GM12878 (cell line): ENCODE measurements at regions of chr3 and their contacts with region 1.

Region 1: DNA sequence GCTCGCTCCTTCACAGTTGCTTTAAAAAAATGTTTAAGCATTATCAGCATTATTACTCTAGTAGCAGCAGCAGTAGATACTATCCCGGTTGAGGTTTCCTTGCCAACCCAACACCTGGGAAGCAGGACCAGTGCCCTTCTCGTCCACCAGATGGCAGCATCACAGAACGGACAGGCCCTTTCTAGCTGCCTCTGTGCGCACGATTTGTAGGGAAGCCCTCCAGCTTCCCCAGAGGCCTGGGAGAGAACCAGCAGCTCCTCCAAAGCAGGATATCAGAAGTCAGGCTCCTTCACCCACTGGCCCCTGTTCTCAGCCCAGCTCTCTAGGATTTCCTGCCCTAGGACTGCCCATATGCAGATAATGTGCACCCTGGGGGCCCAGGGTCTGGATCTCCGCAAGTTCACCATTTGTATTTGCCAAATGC is 16.8 kb upstream of the ESYT3 start:
- DNase-seq: no peak
- ATAC-seq: peak; percentile 98
- H3K4me3 ChIP-seq: no peak overlapping the region
- H3K27ac ChIP-seq: no peak overlapping the region
- H3K4me1 ChIP-seq: no peaks in the 10 kb centered on the region
- H3K27me3 ChIP-seq: peaks cover 0 to 2% of the 10 kb centered on the region in 2 experiments; a peak in 1 of 4 replicates
- CTCF ChIP-seq: peak; percentile 85 to 91 (median 89)
- EP300 ChIP-seq: no peak
- POLR2A ChIP-seq: no peak
- RAD21 ChIP-seq: peak; percentile 67

Region 2: GRCh38 chr3:138186803-138187295 is 230.7 kb before region 1 on chr3:
- CTCF ChIA-PET with region 1: interaction called, 5 read pairs
- POLR2A ChIA-PET with region 1: no interaction called
- RAD21 ChIA-PET with region 1: no interaction called
- SMC1A ChIA-PET with region 1: no interaction called
- in situ Hi-C with region 1: no loop called
- intact Hi-C with region 1: loop called (anchors 10 kb)
- DNase-seq: peak; percentile 54
- ATAC-seq: peak; percentile 94
- H3K4me3 ChIP-seq: peak overlapping the region; percentile 90
- H3K27ac ChIP-seq: peak overlapping the region; percentile 99
- H3K4me1 ChIP-seq: no peaks in the 10 kb centered on the region
- H3K27me3 ChIP-seq: no peaks in the 10 kb centered on the region
- CTCF ChIP-seq: no peak
- EP300 ChIP-seq: no peak
- POLR2A ChIP-seq: no peak
- RAD21 ChIP-seq: no peak

Region 3: GRCh38 chr3:138219255-138219654 is 198.3 kb before region 1 on chr3:
- CTCF ChIA-PET with region 1: no interaction called
- POLR2A ChIA-PET with region 1: no interaction called
- RAD21 ChIA-PET with region 1: no interaction called
- SMC1A ChIA-PET with region 1: no interaction called
- in situ Hi-C with region 1: no loop called
- intact Hi-C with region 1: no loop called
- DNase-seq: no peak
- ATAC-seq: no peak
- H3K4me3 ChIP-seq: no peak overlapping the region
- H3K27ac ChIP-seq: no peak overlapping the region
- H3K4me1 ChIP-seq: no peaks in the 10 kb centered on the region
- H3K27me3 ChIP-seq: no peaks in the 10 kb centered on the region
- CTCF ChIP-seq: no peak
- EP300 ChIP-seq: no peak
- POLR2A ChIP-seq: no peak
- RAD21 ChIP-seq: no peak

Region 4: DNA sequence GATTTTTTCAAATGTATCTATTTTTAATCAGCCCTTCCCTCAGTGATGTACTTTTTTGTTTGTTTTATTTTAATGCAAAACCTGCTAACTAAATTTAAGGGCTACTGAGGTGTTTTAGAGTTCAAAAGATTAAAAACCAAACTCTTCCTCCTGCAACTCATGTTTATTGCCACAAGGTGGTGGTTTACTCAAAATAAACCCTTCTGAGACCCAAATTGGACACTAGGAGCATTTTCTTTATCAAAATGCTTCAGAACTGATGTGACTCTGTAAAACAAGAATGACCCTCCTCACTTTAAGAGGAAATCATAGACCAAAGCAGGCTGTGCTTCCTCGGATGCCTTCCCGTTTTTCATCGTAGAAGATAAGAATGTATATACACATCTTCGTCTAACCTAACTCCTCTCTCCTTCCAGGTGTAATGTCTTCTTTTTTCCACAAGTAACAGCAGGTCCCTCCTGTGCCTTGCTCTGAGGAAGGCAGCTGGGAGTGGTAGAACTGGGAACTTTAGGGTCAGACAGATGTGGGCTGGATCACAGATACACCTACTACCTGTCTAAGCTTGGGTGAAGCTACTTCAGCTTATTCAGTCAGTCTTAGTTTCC is 85.0 kb before region 1 on chr3:
- CTCF ChIA-PET with region 1: interaction called, 3 read pairs
- POLR2A ChIA-PET with region 1: no interaction called
- RAD21 ChIA-PET with region 1: no interaction called
- SMC1A ChIA-PET with region 1: no interaction called
- in situ Hi-C with region 1: no loop called
- intact Hi-C with region 1: loop called (anchors 5 kb)
- DNase-seq: no peak
- ATAC-seq: no peak
- H3K4me3 ChIP-seq: no peak overlapping the region
- H3K27ac ChIP-seq: no peak overlapping the region
- H3K4me1 ChIP-seq: peaks cover 7% of the 10 kb centered on the region
- H3K27me3 ChIP-seq: peaks cover 2 to 16% of the 10 kb centered on the region in 2 experiments; a peak in 3 of 4 replicates
- CTCF ChIP-seq: peak; percentile 24 to 49 (median 42); a peak in 5 of 6 replicates
- EP300 ChIP-seq: no peak
- POLR2A ChIP-seq: no peak
- RAD21 ChIP-seq: peak; percentile 64

Region 5: DNA sequence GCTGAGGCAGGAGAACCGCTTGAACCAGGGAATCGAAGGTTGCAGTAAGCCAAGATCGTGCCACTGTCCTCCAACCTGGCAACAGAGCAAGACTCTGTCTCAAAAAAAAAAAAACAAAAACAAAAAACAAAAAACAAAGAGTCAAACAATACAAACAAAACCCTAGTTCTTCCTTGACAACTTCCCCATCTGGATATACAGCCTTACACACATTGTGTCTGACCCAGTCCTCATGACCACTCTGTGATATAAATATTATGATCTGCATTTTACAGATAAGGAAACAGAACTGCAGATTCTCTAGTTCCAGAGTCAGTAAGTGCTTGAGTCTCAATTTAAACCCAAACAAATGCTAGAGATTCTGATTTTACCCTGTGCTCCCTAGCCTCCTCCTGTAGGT is 12.1 kb after region 1 on chr3:
- CTCF ChIA-PET with region 1: interaction called, 14 read pairs
- POLR2A ChIA-PET with region 1: no interaction called
- RAD21 ChIA-PET with region 1: no interaction called
- SMC1A ChIA-PET with region 1: no interaction called
- in situ Hi-C with region 1: no loop called
- intact Hi-C with region 1: no loop called
- DNase-seq: no peak
- ATAC-seq: no peak
- H3K4me3 ChIP-seq: no peak overlapping the region
- H3K27ac ChIP-seq: no peak overlapping the region
- H3K4me1 ChIP-seq: no peaks in the 10 kb centered on the region
- H3K27me3 ChIP-seq: peaks cover 6 to 10% of the 10 kb centered on the region in 2 experiments
- CTCF ChIP-seq: no peak
- EP300 ChIP-seq: no peak
- POLR2A ChIP-seq: no peak
- RAD21 ChIP-seq: no peak